Activated CD4-positive, alpha-beta T cell treated with anti-CD3 and anti-CD28 coated beads, Interleukin-2, amount 10 ng/mL, durations not matched to agents 24 days and 14 days (primary cell): ENCODE measurements at regions of chr22 and their contacts with region 1.

Region 1: GRCh38 chr22:41946629-41947423 is at the start of gene CENPM:
- DNase-seq: peak; percentile 98
- H3K4me3 Mint-ChIP-seq: peak within 1 kb of the TSS; percentile 94
- H3K27ac Mint-ChIP-seq: peak within 1 kb of the TSS; percentile 94
- H3K4me1 Mint-ChIP-seq: peaks cover 47% of the 10 kb centered on the region
- H3K27me3 Mint-ChIP-seq: no peaks in the 10 kb centered on the region
- total RNA-seq, gene CENPM: 86.9 and 88.6 TPM in 2 replicates

Region 2: DNA sequence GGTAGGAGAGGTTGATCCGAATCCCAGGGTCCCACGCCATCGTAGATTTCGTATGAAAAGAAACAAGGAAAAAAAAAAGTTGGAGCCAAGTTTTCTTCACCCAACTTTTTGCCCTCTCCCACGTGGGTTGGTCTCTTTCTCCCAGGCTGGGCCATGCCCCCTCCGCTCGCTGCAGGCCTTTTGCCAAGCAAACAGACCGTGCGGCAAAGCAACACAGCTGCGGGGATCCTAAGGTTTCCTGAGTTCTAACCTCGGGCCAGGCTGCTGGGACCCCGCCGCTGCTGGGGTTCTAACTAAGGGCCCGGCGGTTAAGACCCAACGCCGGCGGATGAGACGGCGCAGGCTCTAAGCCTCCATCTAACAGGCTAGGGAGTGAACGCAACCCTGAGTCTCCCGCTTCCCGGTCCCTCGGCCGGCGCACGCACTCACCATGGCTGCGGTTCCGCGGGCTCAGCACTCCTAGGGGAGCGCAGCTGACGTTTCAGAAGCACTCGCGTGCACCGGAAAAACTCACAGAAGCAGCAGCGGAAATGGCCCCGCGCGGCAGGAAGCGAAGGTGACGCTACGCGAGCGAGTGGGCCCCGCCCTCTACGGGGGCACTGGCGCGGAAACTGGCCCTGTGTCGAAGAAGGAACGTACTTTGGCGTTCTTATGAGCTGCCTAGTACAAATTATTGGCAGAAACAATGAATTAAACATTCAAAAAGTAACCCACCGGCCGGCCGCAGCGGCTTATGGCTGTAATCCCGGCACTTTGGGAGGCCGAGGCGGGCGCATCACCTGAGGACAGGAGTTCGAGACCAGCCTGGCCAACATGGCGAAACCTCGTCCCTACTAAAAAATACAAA is 258.2 kb before region 1 on chr22 and contains the start of gene SNU13:
- intact Hi-C with region 1: loop called (anchors 2 kb)
- DNase-seq: peak; percentile 98
- H3K4me3 Mint-ChIP-seq: peak within 1 kb of the TSS; percentile 94
- H3K27ac Mint-ChIP-seq: peak within 1 kb of the TSS; percentile 97
- H3K4me1 Mint-ChIP-seq: peaks cover 19% of the 10 kb centered on the region
- H3K27me3 Mint-ChIP-seq: no peaks in the 10 kb centered on the region
- total RNA-seq, gene SNU13: 343 and 345 TPM in 2 replicates

Region 3: DNA sequence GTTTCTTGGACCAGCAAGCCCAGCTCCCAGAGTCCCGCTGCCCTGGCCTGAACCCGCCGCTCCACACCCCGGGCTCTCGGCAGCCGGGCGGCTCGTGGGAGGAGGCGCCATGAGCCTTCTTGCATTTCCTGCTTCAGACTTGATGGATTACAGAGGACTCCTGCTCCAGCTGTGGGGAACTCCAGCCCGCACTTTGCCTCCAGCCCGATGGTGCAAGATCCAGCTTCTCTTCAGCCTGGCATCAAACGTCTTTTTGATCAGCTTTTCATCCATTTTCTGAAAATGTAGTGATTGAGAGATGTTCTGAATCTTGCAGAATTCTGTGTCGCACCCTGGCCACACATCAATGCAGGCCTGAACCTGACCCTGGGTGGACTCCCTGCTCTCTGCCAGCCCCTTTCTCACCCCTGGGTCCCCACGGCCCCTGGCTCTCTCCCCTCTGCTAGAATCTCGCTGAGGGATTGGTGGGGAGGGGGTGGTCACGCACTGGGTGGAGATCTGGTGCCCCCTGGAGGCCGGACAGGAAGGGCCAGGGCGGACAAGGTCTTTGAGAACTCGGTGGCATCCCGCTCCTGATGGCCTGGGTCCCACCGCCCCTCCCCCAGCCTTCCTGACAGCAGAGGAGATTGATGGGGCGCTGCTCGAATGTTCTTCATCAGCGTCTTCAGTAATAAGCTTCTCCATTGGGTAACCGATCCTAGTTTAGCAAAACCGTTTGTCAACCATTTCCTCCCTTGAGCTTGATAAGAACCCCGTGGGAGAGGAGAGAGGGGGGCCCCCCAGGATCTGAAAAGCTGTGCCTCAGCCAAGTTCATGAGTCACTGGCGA is 497.5 kb after region 1 on chr22:
- intact Hi-C with region 1: loop called (anchors 2 kb)
- DNase-seq: peak; percentile 96
- H3K4me3 Mint-ChIP-seq: peak overlapping the region; percentile 78
- H3K27ac Mint-ChIP-seq: peak overlapping the region; percentile 85
- H3K4me1 Mint-ChIP-seq: peaks cover 32% of the 10 kb centered on the region
- H3K27me3 Mint-ChIP-seq: no peaks in the 10 kb centered on the region